Left ventricle myocardium superior (tissue), 1 donor: ENCODE measurements at regions of chr16 and their contacts with region 1.

Region 1: DNA sequence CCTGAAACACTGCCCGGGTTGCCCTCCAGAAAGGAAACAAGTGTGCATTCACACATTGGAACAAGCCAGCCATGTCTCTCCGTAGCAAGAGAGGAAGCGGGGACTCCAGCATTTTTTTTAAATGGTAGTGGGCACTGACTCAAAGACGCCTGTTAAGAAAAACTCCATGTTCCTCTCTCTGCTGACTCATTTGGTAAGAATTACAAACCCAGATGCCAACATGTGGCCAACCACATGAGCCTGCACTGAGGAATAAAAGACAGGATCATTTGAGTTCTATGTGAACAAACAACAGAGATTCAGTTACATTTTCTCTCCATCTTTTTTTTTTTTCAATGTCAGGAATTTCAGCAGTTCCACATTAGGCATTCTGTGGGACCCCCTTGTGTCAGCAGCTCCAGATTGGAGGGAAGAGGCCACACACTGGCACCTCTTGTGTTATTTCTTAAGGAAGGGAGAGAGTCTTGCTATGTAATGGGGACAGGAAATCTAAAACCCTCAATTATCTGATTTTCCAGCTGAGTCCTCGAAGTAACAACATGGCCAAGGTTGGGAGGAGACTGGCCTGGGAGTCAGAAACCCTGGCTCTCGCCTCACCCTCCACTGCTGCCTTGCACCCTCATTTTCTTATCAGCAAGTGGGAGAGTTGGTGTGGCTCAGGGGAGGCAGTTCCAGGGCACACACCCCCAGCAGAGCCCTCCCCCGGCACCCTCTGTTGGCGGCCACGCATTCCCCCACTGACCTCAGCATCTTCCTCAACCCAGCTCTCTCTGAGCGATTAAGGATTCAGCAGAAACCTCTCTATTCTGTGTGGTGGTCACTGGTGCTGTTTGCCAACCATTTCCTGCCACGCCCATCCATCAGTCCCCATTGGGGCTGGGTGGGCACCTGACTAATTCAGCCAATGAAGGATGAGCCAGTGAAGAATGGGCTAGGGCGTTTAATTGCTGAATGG is 173.0 kb downstream of the FOXL1 start:
- DNase-seq: no peak
- ATAC-seq: no peak

Region 2: GRCh38 chr16:86575754-86576557 is 175.4 kb before region 1 on chr16:
- intact Hi-C with region 1: loop called (anchors 10 kb)
- DNase-seq: peak; percentile 91
- ATAC-seq: peak; percentile 89